ENCODE measurements at regions of chr10 and their contacts with region 1.

Region 1: DNA sequence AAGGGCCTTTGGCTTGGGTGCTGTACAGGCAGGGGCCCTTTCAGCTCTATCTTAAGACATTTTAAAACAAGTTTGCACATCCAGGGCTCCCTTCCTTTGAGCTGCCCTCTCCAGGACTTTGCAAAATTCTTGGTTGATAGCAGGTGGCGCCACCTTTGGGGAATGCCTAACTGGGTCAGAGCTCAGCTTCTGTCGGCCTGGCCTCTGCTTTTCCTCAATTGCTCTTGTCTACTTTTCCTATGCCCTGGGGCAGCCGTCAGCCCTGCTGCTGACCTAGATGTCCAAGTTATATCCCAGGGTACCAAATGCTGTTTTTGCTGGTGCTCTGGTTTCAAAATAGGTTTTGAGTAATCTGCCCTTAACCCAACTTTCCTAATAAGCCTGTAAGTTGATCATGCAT is 65.8 kb downstream of the APBB1IP start:
- DNase-seq: peak; percentile 28
- H3K4me3 ChIP-seq: no peak overlapping the region
- H3K27ac ChIP-seq: no peak overlapping the region
- H3K4me1 ChIP-seq: no peaks in the 10 kb centered on the region
- CTCF ChIP-seq: peak; percentile 66

Region 2: GRCh38 chr10:26516540-26517101 is 12.7 kb after region 1 on chr10:
- CTCF ChIA-PET with region 1: no interaction called
- POLR2A ChIA-PET with region 1: interaction called, 10 read pairs
- intact Hi-C with region 1: no loop called
- DNase-seq: no peak
- H3K4me3 ChIP-seq: no peak overlapping the region
- H3K27ac ChIP-seq: no peak overlapping the region
- H3K4me1 ChIP-seq: no peaks in the 10 kb centered on the region
- CTCF ChIP-seq: peak; percentile 47; the same call in 1 of the 2 replicates

Measured in OCI-LY7 (cell line).